ENCODE measurements at regions of chr4 and their contacts with region 1.

Region 1: DNA sequence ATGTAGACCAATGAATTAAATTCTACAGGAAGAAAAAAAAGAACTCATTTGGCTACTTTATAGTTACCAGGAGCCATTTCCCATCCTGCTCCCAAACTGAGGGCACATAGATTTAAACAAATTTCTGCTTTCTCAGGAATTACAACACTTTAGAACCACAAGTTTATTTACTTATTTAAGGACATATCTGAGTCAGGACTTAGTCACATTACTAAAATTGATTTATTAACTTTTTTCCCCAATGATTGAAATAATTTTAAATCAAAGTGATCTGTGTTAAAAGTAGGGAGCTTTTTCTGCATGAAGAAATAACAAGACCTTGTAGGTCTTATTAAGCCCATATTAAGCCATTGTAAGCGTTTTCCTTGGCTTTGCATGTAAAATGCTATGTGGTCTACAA is 291.0 kb upstream of the HAND2 start:
- DNase-seq: no peak
- H3K4me3 ChIP-seq: no peak overlapping the region
- H3K27ac ChIP-seq: no peak overlapping the region
- H3K4me1 ChIP-seq: no peaks in the 10 kb centered on the region
- H3K27me3 ChIP-seq: no peaks in the 10 kb centered on the region
- CTCF ChIP-seq: no peak

Region 2: DNA sequence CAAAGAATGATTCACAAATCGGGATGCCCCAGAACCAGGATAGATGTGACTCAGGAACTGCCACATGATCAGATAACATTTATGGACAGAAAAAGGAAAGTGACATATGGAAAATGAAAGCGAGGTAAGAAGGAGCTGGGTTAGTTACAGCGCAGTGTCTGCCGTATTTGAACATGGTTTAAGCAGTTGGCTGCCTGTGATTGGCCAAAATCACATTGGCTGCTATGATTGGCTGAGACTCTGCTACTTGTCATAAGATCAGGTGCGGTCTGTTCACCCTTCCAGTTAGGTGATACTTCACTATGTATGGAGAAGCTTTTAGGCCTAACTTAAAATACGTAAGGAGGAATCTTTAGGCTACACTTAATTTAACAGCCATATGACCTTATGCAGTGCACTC is 31.7 kb after region 1 on chr4:
- CTCF ChIA-PET with region 1: no interaction called
- POLR2A ChIA-PET with region 1: interaction called, 15 read pairs
- intact Hi-C with region 1: no loop called
- DNase-seq: no peak
- H3K4me3 ChIP-seq: no peak overlapping the region
- H3K27ac ChIP-seq: no peak overlapping the region
- H3K4me1 ChIP-seq: peaks cover 18% of the 10 kb centered on the region
- H3K27me3 ChIP-seq: no peaks in the 10 kb centered on the region
- CTCF ChIP-seq: no peak

Measured in A673 (cell line).